CD8-positive, alpha-beta T cell (primary cell): ENCODE measurements at regions of chr6 and their contacts with region 1.

Region 1: DNA sequence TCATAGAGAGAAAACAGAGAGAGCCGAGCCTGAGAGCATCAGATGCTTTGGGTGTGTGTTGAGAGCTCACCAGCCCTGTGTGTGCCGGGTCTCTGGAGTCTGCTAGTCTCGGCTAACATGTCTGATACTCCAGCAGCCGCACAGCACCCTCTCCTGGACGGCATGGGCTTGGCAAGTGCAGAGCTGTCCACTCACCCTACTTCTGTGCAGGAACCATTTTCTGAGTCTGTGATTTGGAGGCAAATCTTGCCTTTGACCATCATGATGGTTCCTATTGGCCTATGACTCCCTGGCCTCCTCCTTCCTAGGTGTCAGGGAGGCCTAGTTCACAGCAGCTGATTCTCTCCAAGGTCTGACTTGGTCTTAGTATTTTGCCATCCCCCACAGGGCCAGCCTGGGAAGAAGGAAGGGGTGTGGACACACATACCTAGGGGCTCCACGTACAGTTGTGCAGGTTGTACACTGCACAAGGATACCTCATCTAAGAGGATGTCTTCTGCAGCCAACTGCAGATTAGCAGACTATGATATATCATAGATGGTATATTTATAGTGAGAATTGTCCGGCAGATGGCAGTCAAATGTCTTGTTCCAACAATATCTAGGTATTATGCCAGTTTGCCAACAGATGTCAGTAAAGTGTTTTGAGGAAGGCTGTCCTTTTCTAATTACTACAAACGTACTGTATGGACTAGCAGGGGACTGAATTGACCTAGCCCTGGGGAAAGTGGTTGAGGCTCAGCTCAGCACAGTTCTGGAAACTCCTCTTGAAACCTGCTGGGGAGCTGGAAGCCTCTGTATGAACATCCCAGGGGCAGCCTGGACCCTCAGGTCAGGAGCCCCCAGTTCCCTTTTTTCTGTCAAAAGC is 13.0 kb downstream of the FGD2 start:
- DNase-seq: peak; percentile 78 to 90 (median 88)
- ATAC-seq: peak; percentile 94
- H3K4me3 ChIP-seq: no peak overlapping the region
- H3K4me3 Mint-ChIP-seq: no peak overlapping the region
- H3K27ac ChIP-seq: peak overlapping the region in 1 of 2 experiments; percentile 24
- H3K27ac Mint-ChIP-seq: peak overlapping the region; percentile 64
- H3K4me1 ChIP-seq: peaks cover 35% of the 10 kb centered on the region
- H3K4me1 Mint-ChIP-seq: peaks cover 41% of the 10 kb centered on the region
- H3K27me3 ChIP-seq: no peaks in the 10 kb centered on the region
- H3K27me3 Mint-ChIP-seq: no peaks in the 10 kb centered on the region
- CTCF ChIP-seq: peak; percentile 96

Region 2: DNA sequence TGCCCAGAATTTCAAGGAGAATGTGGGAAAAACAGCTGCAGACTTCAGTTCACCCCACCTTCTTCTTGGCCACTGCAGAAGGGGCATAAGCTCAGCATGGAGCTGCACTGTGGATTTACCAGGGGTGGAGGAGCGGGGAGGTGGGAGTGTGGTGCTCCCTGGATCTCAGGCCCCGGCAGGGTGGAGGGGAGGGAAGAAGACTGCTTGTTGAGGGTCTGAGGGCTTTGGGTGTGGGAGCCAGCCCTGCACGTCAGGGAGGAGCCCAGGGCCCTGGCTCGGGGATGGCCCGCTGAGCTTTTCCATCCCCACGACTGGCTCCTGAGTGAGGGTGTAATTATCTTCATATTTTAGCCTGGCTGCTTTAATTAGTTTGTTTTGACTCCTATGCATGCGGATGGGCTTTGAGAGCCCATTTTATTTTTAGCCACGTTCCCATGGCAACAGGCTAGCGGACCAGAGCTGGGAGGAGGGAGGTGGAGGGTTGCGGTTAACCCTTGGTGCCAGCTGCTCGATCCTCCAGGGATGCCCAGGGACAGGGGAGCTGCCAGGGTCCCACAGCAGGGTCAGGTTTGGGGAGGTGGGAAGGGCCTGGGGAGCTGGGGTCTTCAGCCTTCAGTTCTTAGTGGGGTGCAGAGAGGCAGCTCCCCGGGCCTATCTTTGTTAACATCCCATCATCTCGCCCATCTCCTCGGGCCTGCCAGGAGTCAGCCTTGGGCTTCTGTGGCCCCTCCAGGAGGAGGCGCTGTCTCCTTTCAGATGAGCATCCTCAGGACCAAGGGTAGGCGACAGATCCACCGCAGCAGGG is 252.6 kb before region 1 on chr6:
- CTCF ChIA-PET with region 1: interaction called, 66 read pairs
- POLR2A ChIA-PET with region 1: no interaction called
- intact Hi-C with region 1: loop called in 1 of 2 experiments (anchors 1 kb)
- DNase-seq: peak; percentile 65 to 87 (median 80)
- ATAC-seq: peak; percentile 95
- H3K4me3 ChIP-seq: no peak overlapping the region
- H3K4me3 Mint-ChIP-seq: no peak overlapping the region
- H3K27ac ChIP-seq: no peak overlapping the region
- H3K27ac Mint-ChIP-seq: no peak overlapping the region
- H3K4me1 ChIP-seq: peaks cover 42% of the 10 kb centered on the region
- H3K4me1 Mint-ChIP-seq: peaks cover 33% of the 10 kb centered on the region
- H3K27me3 ChIP-seq: no peaks in the 10 kb centered on the region
- H3K27me3 Mint-ChIP-seq: no peaks in the 10 kb centered on the region
- CTCF ChIP-seq: peak; percentile 75

Region 3: DNA sequence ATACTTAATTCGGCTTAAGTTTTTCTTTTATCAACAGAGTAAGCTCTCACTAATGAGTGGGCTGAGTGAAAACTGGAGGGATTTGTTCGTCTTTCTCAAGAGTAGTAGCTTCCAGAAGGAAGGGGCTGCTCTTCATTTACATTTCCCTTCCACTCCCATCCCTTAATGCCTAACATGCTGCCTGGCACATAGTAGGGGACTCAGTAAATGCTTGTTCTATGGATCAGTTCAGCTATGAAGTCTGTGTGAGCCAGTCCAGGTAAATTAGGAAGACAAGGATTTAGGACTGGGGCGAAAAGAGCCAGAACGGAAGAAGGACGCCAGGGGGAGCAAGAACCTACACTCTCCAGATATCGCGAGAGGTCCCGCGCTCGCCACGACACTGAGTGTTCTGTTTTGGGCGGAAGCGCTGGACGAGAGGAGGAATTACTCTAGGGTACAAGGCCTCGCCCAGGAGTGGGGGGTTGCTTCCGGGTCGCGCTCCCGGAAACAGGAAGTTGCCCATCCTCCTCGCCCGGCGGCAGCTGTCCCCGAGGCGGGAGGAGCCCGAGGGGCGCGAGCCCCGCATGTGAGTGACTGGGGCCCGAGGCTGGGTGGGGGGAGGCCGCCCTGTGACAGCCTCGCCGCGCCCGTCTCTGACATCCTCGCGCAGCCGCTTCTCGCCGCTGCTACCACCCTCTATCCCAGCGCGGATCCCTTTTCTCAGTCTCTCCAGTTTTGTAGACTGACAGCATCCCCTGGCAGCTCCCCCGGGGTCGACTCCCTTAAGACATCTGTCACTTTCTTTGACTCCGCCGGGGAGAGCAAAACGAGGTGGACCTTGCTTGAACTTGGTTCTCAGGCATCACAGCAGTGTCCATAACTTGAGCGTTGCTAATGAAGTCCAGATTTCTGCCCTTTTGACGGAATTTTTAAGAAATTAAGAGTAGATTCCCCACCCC is 132.7 kb before region 1 on chr6 and contains the start of gene C6orf89:
- CTCF ChIA-PET with region 1: interaction called, 72 read pairs
- POLR2A ChIA-PET with region 1: interaction called, 11 read pairs
- intact Hi-C with region 1: loop called (anchors 1 kb)
- DNase-seq: peak; percentile 91 to 99 (median 97)
- ATAC-seq: peak; percentile 98
- H3K4me3 ChIP-seq: peak within 1 kb of the TSS; percentile 75 to 78
- H3K4me3 Mint-ChIP-seq: peak within 1 kb of the TSS; percentile 91
- H3K27ac ChIP-seq: peak within 1 kb of the TSS; percentile 63 to 91
- H3K27ac Mint-ChIP-seq: peak within 1 kb of the TSS; percentile 94
- H3K4me1 ChIP-seq: peaks cover 14% of the 10 kb centered on the region
- H3K4me1 Mint-ChIP-seq: peaks cover 38% of the 10 kb centered on the region
- H3K27me3 ChIP-seq: no peaks in the 10 kb centered on the region
- H3K27me3 Mint-ChIP-seq: no peaks in the 10 kb centered on the region
- CTCF ChIP-seq: peak; percentile 81
- total RNA-seq, gene C6orf89: 22.2 TPM

Region 4: GRCh38 chr6:36985808-36986703 is 32.4 kb before region 1 on chr6 and contains the start of gene MTCH1:
- CTCF ChIA-PET with region 1: interaction called, 20 read pairs
- POLR2A ChIA-PET with region 1: interaction called, 14 read pairs
- intact Hi-C with region 1: loop called (anchors 2 kb)
- DNase-seq: peak; percentile 74 to 95 (median 87)
- ATAC-seq: peak; percentile 82
- H3K4me3 ChIP-seq: peak within 1 kb of the TSS; percentile 97
- H3K4me3 Mint-ChIP-seq: no peak within 1 kb of the TSS
- H3K27ac ChIP-seq: peak within 1 kb of the TSS; percentile 83 to 85
- H3K27ac Mint-ChIP-seq: peak within 1 kb of the TSS; percentile 98
- H3K4me1 ChIP-seq: peaks cover 41% of the 10 kb centered on the region
- H3K4me1 Mint-ChIP-seq: peaks cover 20% of the 10 kb centered on the region
- H3K27me3 ChIP-seq: no peaks in the 10 kb centered on the region
- H3K27me3 Mint-ChIP-seq: no peaks in the 10 kb centered on the region
- CTCF ChIP-seq: no peak
- total RNA-seq, gene MTCH1: 267 to 269 TPM

Region 5: DNA sequence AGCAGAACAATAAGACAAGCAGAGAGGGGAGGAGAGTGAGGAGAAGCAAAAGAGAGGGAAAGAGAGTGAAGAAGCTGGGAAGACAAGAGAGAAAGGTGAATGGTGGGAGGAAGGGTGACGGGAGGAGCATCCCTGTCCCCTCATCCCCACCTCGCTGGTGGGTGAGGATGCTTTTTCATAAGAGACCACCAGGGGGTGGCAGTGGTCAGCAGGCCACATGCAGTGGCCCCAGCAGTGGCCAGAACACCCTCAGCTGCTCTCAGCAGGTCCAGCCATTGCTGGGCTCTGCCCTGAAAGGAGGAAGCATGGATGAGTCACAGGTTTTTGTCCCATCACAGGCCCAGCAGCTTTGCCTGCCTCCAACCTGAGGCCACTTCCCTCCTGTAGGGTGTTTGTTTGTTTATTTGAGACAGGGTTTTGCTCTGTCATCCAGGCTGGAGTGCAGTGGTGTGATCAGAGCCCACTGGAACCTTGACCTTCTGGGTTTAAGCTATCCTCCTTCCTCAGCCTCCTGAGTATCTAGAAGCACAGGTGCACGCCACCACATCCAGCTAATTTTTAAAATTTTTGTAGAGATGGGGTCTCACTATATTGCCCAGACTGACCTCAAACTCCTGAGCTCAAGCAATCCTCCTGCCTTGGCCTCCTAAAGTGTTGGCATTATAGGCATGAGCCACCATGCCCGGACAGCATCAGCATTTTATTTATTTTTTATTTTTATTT is 11.0 kb after region 1 on chr6:
- CTCF ChIA-PET with region 1: interaction called, 28 read pairs
- POLR2A ChIA-PET with region 1: no interaction called
- intact Hi-C with region 1: no loop called
- DNase-seq: peak in 7 of 9 experiments; percentile 15 to 72 (median 49)
- ATAC-seq: peak; percentile 67
- H3K4me3 ChIP-seq: no peak overlapping the region
- H3K4me3 Mint-ChIP-seq: no peak overlapping the region
- H3K27ac ChIP-seq: no peak overlapping the region
- H3K27ac Mint-ChIP-seq: no peak overlapping the region
- H3K4me1 ChIP-seq: peaks cover 7% of the 10 kb centered on the region
- H3K4me1 Mint-ChIP-seq: peaks cover 10% of the 10 kb centered on the region
- H3K27me3 ChIP-seq: no peaks in the 10 kb centered on the region
- H3K27me3 Mint-ChIP-seq: no peaks in the 10 kb centered on the region
- CTCF ChIP-seq: peak; percentile 59

Region 6: GRCh38 chr6:37182736-37183590 is 164.5 kb after region 1 on chr6:
- CTCF ChIA-PET with region 1: interaction called, 396 read pairs
- POLR2A ChIA-PET with region 1: interaction called, 4 read pairs
- intact Hi-C with region 1: no loop called
- DNase-seq: peak in 8 of 9 experiments; percentile 33 to 87 (median 68)
- ATAC-seq: peak; percentile 96
- H3K4me3 ChIP-seq: peak overlapping the region in 1 of 2 experiments; percentile 34
- H3K4me3 Mint-ChIP-seq: peak overlapping the region; percentile 62
- H3K27ac ChIP-seq: peak overlapping the region; percentile 61 to 73
- H3K27ac Mint-ChIP-seq: peak overlapping the region; percentile 95
- H3K4me1 ChIP-seq: peaks cover 78% of the 10 kb centered on the region
- H3K4me1 Mint-ChIP-seq: peaks cover 63% of the 10 kb centered on the region
- H3K27me3 ChIP-seq: no peaks in the 10 kb centered on the region
- H3K27me3 Mint-ChIP-seq: no peaks in the 10 kb centered on the region
- CTCF ChIP-seq: no peak

Region 7: GRCh38 chr6:37207903-37208456 is 189.5 kb after region 1 on chr6:
- CTCF ChIA-PET with region 1: interaction called, 785 read pairs
- POLR2A ChIA-PET with region 1: interaction called, 41 read pairs
- intact Hi-C with region 1: loop called (anchors 1 kb)
- DNase-seq: peak; percentile 75 to 95 (median 87)
- ATAC-seq: peak; percentile 70
- H3K4me3 ChIP-seq: no peak overlapping the region
- H3K4me3 Mint-ChIP-seq: peak overlapping the region; percentile 35
- H3K27ac ChIP-seq: peak overlapping the region in 1 of 2 experiments; percentile 4
- H3K27ac Mint-ChIP-seq: peak overlapping the region; percentile 85
- H3K4me1 ChIP-seq: peaks cover 51% of the 10 kb centered on the region
- H3K4me1 Mint-ChIP-seq: peaks cover 51% of the 10 kb centered on the region
- H3K27me3 ChIP-seq: no peaks in the 10 kb centered on the region
- H3K27me3 Mint-ChIP-seq: no peaks in the 10 kb centered on the region
- CTCF ChIP-seq: peak; percentile 83